Upper lobe of right lung (tissue), 1 donor: ENCODE measurements at regions of chr19 and their contacts with region 1.

Region 1: DNA sequence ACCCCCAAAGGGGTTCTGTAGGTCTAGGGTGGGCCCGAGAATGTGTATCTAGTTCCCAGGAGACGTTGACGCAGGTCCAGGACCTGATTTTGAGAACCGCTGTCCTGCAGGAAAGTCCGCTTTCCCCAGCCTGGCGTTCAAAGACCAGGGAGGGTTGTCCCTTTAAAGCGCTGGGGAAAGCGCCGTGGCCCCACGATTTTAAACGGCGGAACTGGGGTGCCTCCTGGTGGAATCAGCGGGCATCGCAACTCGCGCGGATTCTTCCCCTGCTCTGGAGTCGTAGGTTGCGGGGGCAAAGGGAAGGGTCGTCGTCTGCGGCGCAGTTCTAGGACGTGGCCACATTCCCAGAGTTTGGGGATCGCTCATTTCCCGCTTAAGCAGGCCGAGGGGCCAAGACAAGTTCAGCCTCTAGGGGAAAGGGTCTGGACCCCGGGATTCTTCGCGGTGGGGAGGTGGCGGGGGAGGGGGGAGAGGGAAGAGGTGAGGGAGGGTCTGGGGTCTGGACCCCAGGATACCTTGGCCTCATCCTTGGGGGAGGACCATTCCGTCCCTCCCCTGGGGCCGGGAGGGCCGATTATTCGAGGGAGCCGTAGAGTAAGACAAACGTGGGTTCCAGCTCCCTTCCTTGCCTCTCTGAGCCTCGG is 7.7 kb downstream of the PNMA8B start:
- DNase-seq: peak; percentile 87
- ATAC-seq: peak; percentile 81
- H3K4me3 ChIP-seq: peak overlapping the region; percentile 29
- H3K27ac ChIP-seq: no peak overlapping the region
- H3K4me1 ChIP-seq: peaks cover 22% of the 10 kb centered on the region
- H3K27me3 ChIP-seq: peaks cover 60% of the 10 kb centered on the region
- CTCF ChIP-seq: peak; percentile 90

Region 2: DNA sequence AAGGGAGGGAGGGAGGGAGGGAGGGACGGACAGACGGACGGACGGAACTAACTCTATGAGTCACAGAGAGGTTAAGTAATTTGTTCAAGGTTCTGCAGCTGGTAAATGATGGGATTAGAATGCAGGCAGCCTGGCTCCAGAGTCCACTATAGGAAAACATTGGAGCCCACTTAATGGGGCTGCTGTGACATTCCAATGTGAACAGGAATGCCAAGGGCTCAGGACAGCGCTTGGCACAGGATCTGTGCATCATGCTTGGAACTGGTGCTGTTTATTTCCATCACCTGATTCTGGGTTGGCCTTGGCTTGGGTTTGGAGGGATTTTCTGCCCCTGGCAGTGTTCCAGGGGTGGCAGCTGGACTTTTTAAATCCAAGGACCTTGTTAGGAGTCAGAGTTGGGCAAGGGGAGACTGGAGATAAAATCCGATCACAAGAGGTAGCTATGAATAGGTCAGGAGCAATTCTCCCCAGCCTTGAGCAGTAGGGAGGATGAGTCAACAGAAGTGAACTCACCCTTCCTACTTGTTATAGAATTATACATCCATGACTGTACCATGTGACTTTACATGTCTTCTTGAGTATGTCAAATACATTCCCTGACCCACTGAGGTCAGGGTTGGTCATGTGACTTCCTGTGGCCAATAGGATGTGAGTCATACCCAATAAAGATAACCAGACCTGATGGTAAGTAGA is 198.9 kb before region 1 on chr19:
- intact Hi-C with region 1: loop called (anchors 10 kb)
- DNase-seq: no peak
- ATAC-seq: peak; percentile 62
- H3K4me3 ChIP-seq: no peak overlapping the region
- H3K27ac ChIP-seq: peak overlapping the region; percentile 55
- H3K4me1 ChIP-seq: peaks cover 4% of the 10 kb centered on the region
- H3K27me3 ChIP-seq: no peaks in the 10 kb centered on the region
- CTCF ChIP-seq: no peak

Region 3: GRCh38 chr19:46404055-46404752 is 83.7 kb before region 1 on chr19:
- intact Hi-C with region 1: loop called (anchors 5 kb)
- DNase-seq: no peak
- ATAC-seq: peak; percentile 70
- H3K4me3 ChIP-seq: peak overlapping the region; percentile 48
- H3K27ac ChIP-seq: peak overlapping the region; percentile 47
- H3K4me1 ChIP-seq: peaks cover 10% of the 10 kb centered on the region
- H3K27me3 ChIP-seq: peaks cover 32% of the 10 kb centered on the region
- CTCF ChIP-seq: peak; percentile 25

Region 4: GRCh38 chr19:46442808-46443450 is 45.0 kb before region 1 on chr19:
- intact Hi-C with region 1: no loop called
- DNase-seq: peak; percentile 40
- ATAC-seq: no peak
- H3K4me3 ChIP-seq: no peak overlapping the region
- H3K27ac ChIP-seq: no peak overlapping the region
- H3K4me1 ChIP-seq: no peaks in the 10 kb centered on the region
- H3K27me3 ChIP-seq: no peaks in the 10 kb centered on the region
- CTCF ChIP-seq: no peak